ENCODE measurements at regions of chr3 and their contacts with region 1.

Region 1: DNA sequence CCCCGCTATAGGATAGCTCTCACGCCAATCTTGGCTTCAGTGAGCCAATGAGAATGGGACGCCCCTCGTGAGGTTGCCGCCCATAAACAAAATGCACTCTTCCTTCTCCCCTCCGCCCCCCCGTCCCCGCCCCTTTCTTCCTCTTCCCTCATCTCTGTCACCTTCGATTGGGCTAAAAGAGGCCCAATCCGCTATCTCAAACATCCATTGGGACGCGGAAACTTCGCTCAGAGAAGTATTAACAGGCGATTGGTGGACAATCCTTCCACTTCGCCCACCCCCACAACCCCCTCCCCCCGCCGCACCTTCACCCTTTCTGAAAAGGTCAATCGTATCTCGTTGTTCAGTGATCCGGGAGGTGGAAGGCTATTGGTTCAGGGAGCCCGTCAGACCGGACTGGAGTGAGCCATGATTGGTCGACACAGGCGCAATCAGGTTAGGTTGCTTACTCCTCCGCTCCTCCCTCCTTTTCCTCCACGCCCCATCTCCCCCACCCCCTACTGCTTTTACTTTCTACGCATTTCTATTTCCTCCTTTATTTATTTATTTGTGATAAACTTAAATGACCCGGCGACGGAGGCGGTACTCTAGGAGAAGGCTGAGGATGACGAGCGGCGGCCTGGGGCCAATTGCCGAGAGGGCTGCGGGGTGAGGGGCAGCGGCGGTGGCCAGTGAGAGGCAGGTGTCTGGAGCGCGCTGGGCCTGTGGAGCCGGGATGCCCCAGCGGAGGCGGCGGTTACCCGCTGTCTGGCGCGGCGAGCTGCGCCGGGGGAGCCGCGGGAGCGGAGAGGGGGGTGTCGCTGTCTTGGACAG is 447 bp upstream of the ZBTB20 start:
- DNase-seq: peak; percentile 98 to 99
- H3K4me3 ChIP-seq: peak overlapping the region; percentile 87 to 94
- H3K27ac ChIP-seq: peak overlapping the region; percentile 94 to 98
- H3K4me1 ChIP-seq: peaks cover 0 to 16% of the 10 kb centered on the region in 2 donors
- H3K27me3 ChIP-seq: no peaks in the 10 kb centered on the region
- CTCF ChIP-seq: no peak

Region 2: GRCh38 chr3:113745273-113746068 is 1402.1 kb before region 1 on chr3:
- intact Hi-C with region 1: loop called (anchors 2 kb)
- DNase-seq: peak; percentile 59 to 88
- H3K4me3 ChIP-seq: peak overlapping the region; percentile 97 to 100
- H3K27ac ChIP-seq: peak overlapping the region; percentile 98 to 100
- H3K4me1 ChIP-seq: peaks cover 6 to 29% of the 10 kb centered on the region in 2 donors
- H3K27me3 ChIP-seq: no peaks in the 10 kb centered on the region
- CTCF ChIP-seq: peak; percentile 44 to 80 (median 65)

Region 3: GRCh38 chr3:114056130-114057010 is 1091.2 kb before region 1 on chr3 and contains the starts of genes CCDC191 and QTRT2:
- intact Hi-C with region 1: loop called (anchors 5 kb)
- DNase-seq: peak; percentile 96 to 100
- H3K4me3 ChIP-seq: peak within 1 kb of the TSS; percentile 73 to 80
- H3K27ac ChIP-seq: peak within 1 kb of the TSS; percentile 61 to 68
- H3K4me1 ChIP-seq: peaks cover 8% of the 10 kb centered on the region in 2 donors
- H3K27me3 ChIP-seq: no peaks in the 10 kb centered on the region
- CTCF ChIP-seq: no peak
- total RNA-seq, gene CCDC191: 0.21 TPM
- total RNA-seq, gene QTRT2: 9.5 TPM

Region 4: GRCh38 chr3:114839476-114839875 is 308.1 kb before region 1 on chr3:
- intact Hi-C with region 1: no loop called
- DNase-seq: no peak
- H3K4me3 ChIP-seq: no peak overlapping the region
- H3K27ac ChIP-seq: no peak overlapping the region
- H3K4me1 ChIP-seq: no peaks in the 10 kb centered on the region
- H3K27me3 ChIP-seq: no peaks in the 10 kb centered on the region
- CTCF ChIP-seq: no peak

Region 5: DNA sequence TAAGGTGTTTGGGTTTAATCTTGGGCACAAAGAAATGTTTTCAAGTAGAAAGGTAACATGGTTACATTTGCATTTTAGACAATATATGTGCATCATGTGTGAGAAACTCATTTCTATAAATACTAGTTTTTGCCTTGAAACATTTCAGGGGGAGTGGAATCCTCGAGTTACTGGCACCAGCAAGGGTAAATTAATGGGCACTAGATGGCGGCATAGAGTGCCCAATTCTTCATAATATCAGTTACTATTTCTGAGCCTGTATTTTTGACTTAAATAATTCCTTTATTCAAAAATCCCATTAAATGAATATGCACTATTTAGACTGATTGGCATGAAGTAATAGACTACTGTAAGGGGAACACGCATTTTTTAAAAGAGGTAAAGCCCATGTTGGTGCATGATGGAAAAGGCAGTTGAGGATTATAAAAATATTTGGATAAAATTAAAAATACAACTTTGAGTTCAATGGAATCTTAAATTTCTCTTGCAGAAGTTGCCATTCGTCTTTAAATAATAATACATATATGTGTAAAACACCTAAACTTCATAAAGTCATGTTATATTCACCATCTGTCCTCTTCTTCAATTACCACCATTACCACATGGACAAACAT is 106.8 kb before region 1 on chr3:
- intact Hi-C with region 1: loop called (anchors 10 kb)
- DNase-seq: peak in 1 of 2 donors; percentile 61
- H3K4me3 ChIP-seq: no peak overlapping the region
- H3K27ac ChIP-seq: no peak overlapping the region
- H3K4me1 ChIP-seq: peaks cover 0 to 8% of the 10 kb centered on the region in 2 donors
- H3K27me3 ChIP-seq: no peaks in the 10 kb centered on the region
- CTCF ChIP-seq: peak; percentile 26 to 58 (median 51)

Region 6: GRCh38 chr3:115658337-115659181 is 511.0 kb after region 1 on chr3:
- intact Hi-C with region 1: loop called (anchors 1 kb)
- DNase-seq: peak; percentile 29 to 91
- H3K4me3 ChIP-seq: peak overlapping the region; percentile 57 to 88
- H3K27ac ChIP-seq: peak overlapping the region; percentile 95 to 96
- H3K4me1 ChIP-seq: peaks cover 3 to 12% of the 10 kb centered on the region in 2 donors
- H3K27me3 ChIP-seq: no peaks in the 10 kb centered on the region
- CTCF ChIP-seq: no peak

Region 7: DNA sequence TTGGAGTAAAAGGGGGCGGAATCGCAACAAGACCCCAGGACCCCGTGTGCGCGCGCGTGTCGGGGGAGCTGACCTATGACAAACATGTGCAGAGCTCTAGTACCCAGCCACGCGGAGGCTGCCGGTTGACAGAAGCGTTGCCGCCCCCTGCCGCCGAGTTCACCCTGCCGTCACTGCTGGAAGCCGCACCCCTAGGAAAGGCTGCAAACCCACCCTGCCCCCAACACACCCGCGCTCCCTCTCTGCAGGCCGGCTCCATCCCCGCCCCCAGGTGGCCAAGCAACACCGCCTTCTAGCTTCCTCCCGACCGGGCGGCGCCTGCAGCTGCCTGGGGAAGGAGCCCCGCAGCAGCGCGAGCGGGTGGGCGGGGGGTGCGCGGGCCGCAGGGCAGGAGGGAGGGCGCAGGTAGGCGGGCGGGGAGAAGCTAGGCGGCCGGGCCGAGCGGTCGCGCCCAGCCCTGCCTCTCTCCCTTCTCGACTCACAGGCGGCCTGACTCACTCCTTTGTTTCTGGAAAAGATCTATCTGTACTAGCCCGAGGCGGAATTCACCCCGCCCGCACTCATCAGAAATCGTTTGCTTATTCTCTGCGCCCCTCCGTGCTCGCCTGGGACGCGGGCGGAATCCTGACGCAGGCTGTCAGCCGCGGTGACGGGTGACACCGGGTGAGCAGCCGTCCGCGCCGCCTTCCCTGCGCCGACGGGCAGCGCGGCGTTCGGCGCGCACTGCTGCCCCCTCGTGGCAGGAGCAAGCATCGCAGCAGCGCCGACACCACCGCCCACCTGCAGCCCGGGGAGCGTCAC is 636.6 kb after region 1 on chr3:
- intact Hi-C with region 1: loop called (anchors 1 kb)
- DNase-seq: peak; percentile 73 to 92
- H3K4me3 ChIP-seq: peak overlapping the region; percentile 84 to 95
- H3K27ac ChIP-seq: peak overlapping the region; percentile 86 to 95
- H3K4me1 ChIP-seq: peaks cover 3% of the 10 kb centered on the region in 2 donors
- H3K27me3 ChIP-seq: no peaks in the 10 kb centered on the region
- CTCF ChIP-seq: peak; percentile 91 to 99 (median 97)

Measured in ascending aorta (tissue), 2 donors.